ENCODE measurements at regions of chr3 and their contacts with region 1.

Region 1: GRCh38 chr3:10941972-10942371 is 50.6 kb upstream of the SLC6A1 start:
- DNase-seq: no peak
- H3K4me3 ChIP-seq: no peak overlapping the region
- H3K27ac ChIP-seq: no peak overlapping the region
- H3K4me1 ChIP-seq: no peaks in the 10 kb centered on the region
- H3K27me3 ChIP-seq: no peaks in the 10 kb centered on the region
- CTCF ChIP-seq: peak in 1 of 3 experiments; percentile 10
- POLR2A ChIP-seq: no peak

Region 2: GRCh38 chr3:10992017-10992941 is 50.3 kb after region 1 on chr3 and contains the start of gene SLC6A1:
- intact Hi-C with region 1: no loop called
- DNase-seq: no peak
- H3K4me3 ChIP-seq: peak within 1 kb of the TSS; percentile 44 to 55
- H3K27ac ChIP-seq: peak within 1 kb of the TSS; percentile 22
- H3K4me1 ChIP-seq: peaks cover 20% of the 10 kb centered on the region
- H3K27me3 ChIP-seq: no peaks in the 10 kb centered on the region
- CTCF ChIP-seq: no peak
- POLR2A ChIP-seq: no peak
- total RNA-seq, gene SLC6A1: 2.0 TPM

Region 3: GRCh38 chr3:12670365-12671119 is 1728.6 kb after region 1 on chr3:
- intact Hi-C with region 1: loop called (anchors 5 kb)
- DNase-seq: no peak
- H3K4me3 ChIP-seq: no peak overlapping the region
- H3K27ac ChIP-seq: no peak overlapping the region
- H3K4me1 ChIP-seq: no peaks in the 10 kb centered on the region
- H3K27me3 ChIP-seq: no peaks in the 10 kb centered on the region
- CTCF ChIP-seq: no peak
- POLR2A ChIP-seq: no peak

Measured in vagina (tissue), 2 donors.